GM23248 (cell line): ENCODE measurements at regions of chr1 and their contacts with region 1.

Region 1: DNA sequence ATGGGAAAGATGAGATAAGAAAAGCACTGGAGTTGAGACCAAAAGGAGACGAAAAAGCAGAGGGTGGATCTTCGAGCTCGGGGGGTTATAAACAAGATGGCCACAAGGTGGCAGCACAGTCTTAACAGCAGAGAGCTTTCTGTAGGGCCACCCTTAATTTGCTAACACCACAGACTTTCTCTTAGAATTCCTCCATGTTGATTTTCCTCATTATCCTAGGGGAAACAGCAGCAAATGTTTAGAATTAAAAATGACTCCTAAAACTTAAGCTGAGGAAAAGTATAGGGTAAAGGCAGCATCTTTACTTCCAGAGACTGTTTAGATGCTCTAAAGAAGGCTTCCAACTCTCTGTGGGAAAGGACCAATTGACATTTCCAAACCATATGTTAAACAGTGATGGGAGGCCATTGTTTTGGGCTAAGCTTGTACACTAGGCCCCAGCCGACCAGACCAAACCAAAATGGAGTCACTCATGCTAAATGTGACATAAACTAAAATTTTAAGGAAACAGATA is 2.5 kb upstream of the APOBEC4 start:
- DNase-seq: peak; percentile 86
- H3K4me3 ChIP-seq: no peak overlapping the region
- H3K27ac ChIP-seq: no peak overlapping the region
- H3K4me1 ChIP-seq: peaks cover 19% of the 10 kb centered on the region
- H3K27me3 ChIP-seq: no peaks in the 10 kb centered on the region

Region 2: GRCh38 chr1:183106746-183107145 is 548.9 kb before region 1 on chr1:
- in situ Hi-C with region 1: no loop called
- DNase-seq: peak; percentile 46
- H3K4me3 ChIP-seq: no peak overlapping the region
- H3K27ac ChIP-seq: peak overlapping the region; percentile 43; the same call in 1 of the 2 replicates
- H3K4me1 ChIP-seq: peaks cover 26% of the 10 kb centered on the region; the same call in 1 of the 2 replicates
- H3K27me3 ChIP-seq: no peaks in the 10 kb centered on the region

Region 3: DNA sequence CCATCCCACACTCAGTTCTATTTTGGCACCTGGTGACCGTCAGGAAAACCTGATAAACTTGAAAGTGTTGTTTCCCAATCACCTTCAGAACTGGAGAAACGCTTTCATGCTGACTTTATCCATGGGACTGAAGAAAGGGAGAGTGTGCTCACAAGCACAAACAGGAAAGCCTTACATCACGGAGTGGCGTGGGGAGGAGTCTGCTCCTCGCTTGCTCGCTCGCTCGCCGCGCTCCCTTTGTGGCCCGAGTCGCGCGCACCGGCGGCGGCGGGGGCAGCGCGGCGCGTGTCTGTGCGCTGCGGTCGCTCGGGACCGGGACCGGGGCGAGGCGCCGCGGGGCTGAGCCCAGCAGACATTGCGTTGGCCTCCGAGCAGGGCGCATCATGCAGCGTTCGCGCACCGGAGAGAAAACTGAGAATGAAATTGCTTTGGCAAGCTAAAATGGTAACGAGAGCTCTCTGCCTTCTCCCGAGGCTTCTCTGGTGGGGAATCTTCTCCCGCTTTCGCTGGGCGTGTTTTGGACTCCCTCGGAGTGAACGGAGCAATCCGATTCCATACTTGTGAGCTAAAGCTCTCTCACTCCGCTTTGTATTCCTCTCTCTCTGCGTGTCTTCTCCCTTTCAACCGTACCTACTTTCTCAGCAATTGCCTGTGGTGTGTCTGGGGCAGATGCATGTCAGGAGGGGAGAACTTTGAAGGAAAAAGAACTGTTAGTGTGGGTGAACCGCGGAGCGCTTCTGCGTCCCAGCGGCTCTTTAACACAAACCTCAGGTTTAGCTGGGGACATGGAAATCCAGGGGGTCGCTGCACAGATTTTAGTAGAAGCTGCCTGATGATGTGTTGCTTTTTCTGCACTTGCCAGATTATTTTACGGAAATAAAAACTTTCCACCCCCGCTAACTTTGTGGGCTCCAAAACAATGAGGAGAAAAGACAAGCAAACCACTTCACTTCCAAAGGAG is 149.5 kb after region 1 on chr1 and contains the start of gene RGL1:
- in situ Hi-C with region 1: no loop called
- DNase-seq: peak; percentile 90
- H3K4me3 ChIP-seq: peak within 1 kb of the TSS; percentile 97
- H3K27ac ChIP-seq: peak within 1 kb of the TSS; percentile 64
- H3K4me1 ChIP-seq: peaks cover 38% of the 10 kb centered on the region
- H3K27me3 ChIP-seq: no peaks in the 10 kb centered on the region
- total RNA-seq, gene RGL1: 8.6 and 13.4 TPM in 2 replicates

Region 4: GRCh38 chr1:183915625-183916510 is 260.2 kb after region 1 on chr1:
- in situ Hi-C with region 1: loop called (anchors 10 kb)
- DNase-seq: peak; percentile 98
- H3K4me3 ChIP-seq: peak overlapping the region; percentile 66
- H3K27ac ChIP-seq: peak overlapping the region; percentile 98
- H3K4me1 ChIP-seq: peaks cover 34% of the 10 kb centered on the region
- H3K27me3 ChIP-seq: no peaks in the 10 kb centered on the region

Region 5: DNA sequence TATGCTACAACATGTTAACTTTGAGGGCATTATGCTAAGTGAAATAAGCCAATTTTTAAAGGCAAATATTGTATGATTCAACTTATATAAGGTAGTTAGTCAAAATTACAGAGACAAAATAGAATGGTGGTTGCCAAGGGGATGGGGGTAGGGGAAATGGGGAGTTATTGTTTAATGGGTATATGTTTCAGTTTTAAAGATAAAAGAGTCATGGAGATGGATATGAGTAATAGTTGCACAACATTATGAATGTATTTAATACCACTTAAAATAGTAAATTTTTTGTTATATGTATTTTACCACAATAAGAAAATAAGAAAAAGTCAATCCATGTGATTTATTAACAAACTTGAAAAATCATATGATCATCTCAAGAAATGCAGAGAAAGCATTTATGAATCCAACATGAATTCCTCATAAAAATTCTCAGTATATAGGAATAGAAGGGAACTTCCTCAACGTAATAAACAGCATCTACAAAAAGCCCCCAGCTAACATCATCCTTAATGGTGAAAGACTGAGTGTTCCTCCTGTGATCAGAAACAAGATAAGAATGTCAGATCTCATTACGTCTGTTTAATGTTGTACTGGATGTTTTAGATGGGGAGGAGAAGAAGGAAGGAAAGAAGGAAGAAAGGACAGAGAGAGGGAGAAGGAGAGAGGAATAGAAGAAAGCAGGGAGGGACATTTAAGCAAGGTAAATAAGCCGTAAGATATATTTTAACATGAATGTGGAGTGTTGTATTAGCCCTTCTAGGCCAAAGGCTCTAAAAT is 389.2 kb after region 1 on chr1:
- in situ Hi-C with region 1: loop called (anchors 10 kb)
- DNase-seq: no peak
- H3K4me3 ChIP-seq: no peak overlapping the region
- H3K27ac ChIP-seq: no peak overlapping the region
- H3K4me1 ChIP-seq: peaks cover 1% of the 10 kb centered on the region
- H3K27me3 ChIP-seq: no peaks in the 10 kb centered on the region